ENCODE measurements at regions of chr2 and their contacts with region 1.

Region 1: GRCh38 chr2:25376750-25377621 is 35.3 kb upstream of the DNMT3A start:
- DNase-seq: peak; percentile 78 to 88 (median 86)
- H3K4me3 ChIP-seq: peak overlapping the region in 1 of 4 donors; percentile 16
- H3K27ac ChIP-seq: no peak overlapping the region
- H3K4me1 ChIP-seq: peaks cover 0 to 26% of the 10 kb centered on the region in 2 donors
- H3K27me3 ChIP-seq: no peaks in the 10 kb centered on the region
- CTCF ChIP-seq: peak; percentile 58 to 98 (median 74)
- POLR2A ChIP-seq: no peak

Region 2: DNA sequence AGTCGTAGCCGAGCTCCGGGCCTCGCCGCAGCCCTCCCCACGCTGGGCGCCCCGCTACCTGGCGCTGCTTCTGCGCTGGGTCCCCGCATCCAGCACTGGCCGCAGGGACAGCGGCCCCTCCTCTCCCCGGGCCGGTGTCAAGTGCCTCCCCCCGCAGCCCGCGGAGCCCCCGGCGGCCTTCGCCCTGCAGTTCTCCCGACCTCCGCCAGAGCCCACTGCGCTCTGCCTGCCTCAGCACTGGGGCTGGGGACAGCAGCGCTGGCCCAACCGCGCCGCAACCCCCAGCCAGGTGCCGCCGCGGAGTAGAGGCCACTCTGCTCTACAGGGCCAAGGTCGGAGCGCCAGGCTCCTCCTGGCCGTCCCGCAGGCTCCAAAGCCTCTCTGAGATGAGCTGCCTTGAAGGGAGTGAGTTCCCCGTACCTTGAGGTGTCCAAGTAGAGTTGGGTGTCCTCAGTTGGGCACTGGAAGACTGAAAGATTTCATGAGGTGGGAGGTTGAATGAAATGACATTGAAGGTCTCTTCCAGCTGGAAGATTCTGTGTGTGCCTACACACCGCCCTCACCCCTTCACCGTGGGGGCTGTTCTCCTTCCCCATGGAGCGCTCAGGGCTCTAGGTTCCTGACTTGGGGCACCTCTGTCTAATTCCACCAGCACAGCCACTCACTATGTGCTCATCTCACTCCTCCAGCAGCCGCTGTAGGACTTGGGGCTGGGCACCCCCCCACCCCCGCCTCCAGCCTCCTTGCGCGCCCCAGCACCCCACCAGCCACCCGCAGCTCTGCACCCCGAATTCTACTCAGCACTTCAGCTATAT is 34.4 kb before region 1 on chr2:
- intact Hi-C with region 1: loop called (anchors 5 kb)
- DNase-seq: peak; percentile 84 to 92 (median 86)
- H3K4me3 ChIP-seq: peak overlapping the region in 2 of 4 donors; percentile 40 to 66
- H3K27ac ChIP-seq: peak overlapping the region in 3 of 5 donors; percentile 60 to 92 (median 78)
- H3K4me1 ChIP-seq: peaks cover 12 to 30% of the 10 kb centered on the region in 2 donors
- H3K27me3 ChIP-seq: no peaks in the 10 kb centered on the region
- CTCF ChIP-seq: peak; percentile 90 to 100 (median 98)
- POLR2A ChIP-seq: peak in 1 of 2 donors; percentile 41

Region 3: GRCh38 chr2:25521665-25522387 is 144.8 kb after region 1 on chr2:
- intact Hi-C with region 1: loop called in 1 of 2 experiments (anchors 5 kb)
- DNase-seq: peak in 5 of 7 donors; percentile 39 to 65 (median 48)
- H3K4me3 ChIP-seq: peak overlapping the region in 2 of 4 donors; percentile 18 to 52
- H3K27ac ChIP-seq: peak overlapping the region in 1 of 5 donors; percentile 52
- H3K4me1 ChIP-seq: peaks cover 0 to 4% of the 10 kb centered on the region in 2 donors
- H3K27me3 ChIP-seq: no peaks in the 10 kb centered on the region
- CTCF ChIP-seq: peak; percentile 74 to 94 (median 87)
- POLR2A ChIP-seq: no peak

Measured in adrenal gland (tissue), 19 donors.